Right ventricle myocardium inferior (tissue), 1 donor: ENCODE measurements at regions of chr17 and their contacts with region 1.

Region 1: GRCh38 chr17:50087246-50087911 is 7.8 kb upstream of the PDK2 start:
- DNase-seq: peak; percentile 87
- ATAC-seq: peak; percentile 84

Region 2: GRCh38 chr17:49997791-49998703 is 89.3 kb before region 1 on chr17:
- intact Hi-C with region 1: no loop called
- DNase-seq: no peak
- ATAC-seq: peak; percentile 80

Region 3: DNA sequence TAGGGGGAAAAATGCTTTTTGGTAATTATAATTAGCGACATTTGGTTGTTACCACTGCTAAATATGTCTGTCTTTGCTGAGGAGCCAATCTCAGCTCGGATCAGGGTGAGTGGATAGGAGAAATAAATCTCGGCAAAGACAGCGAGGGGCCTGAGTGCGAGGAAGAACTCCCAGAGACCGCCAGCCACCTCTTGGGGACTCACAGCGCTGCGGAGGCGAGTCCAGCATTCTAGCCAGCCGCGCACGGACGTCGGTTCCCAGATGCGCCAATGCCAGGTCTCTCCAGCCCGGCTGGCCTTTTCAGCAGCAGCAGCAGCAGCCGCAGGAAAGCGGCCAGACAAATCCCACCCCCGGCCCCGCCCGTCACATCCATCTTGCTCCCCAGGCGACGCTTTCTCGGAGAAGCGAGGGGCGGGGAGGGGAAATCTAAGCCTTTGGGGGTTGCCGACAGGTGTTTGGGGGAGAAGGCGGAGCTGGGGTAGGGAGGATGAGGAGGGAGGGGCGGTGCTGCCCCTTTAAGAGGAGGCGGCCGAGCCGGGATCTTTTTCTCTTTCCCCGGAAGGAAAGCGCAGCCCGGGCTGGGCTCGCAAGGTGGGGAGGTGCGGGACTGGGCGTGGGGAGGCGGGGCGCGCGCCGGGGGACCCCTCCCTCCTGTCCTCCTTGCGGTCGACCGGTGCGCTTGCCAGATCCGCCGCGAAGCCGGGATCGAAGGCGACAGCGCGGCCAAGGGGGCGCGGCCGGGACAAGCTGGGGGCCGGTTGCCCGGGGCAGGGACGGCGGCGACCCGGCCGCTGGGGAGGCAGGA is 31.8 kb before region 1 on chr17 and contains the start of gene ITGA3:
- intact Hi-C with region 1: loop called (anchors 2 kb)
- DNase-seq: peak; percentile 84
- ATAC-seq: peak; percentile 64
- total RNA-seq, gene ITGA3: 16.4 TPM

Region 4: GRCh38 chr17:50123649-50124349 is 36.4 kb after region 1 on chr17:
- intact Hi-C with region 1: no loop called
- DNase-seq: peak; percentile 52
- ATAC-seq: peak; percentile 22